Activated naive CD4-positive, alpha-beta T cell treated with anti-CD3 and anti-CD28 coated beads, Interleukin-2, amount 10 ng/mL, durations not matched to agents 7 days and 5 days (primary cell): ENCODE measurements at regions of chr5 and their contacts with region 1.

Region 1: GRCh38 chr5:172714491-172715421 is 56.2 kb downstream of the DUSP1 start:
- DNase-seq: peak; percentile 77
- H3K4me3 Mint-ChIP-seq: no peak overlapping the region
- H3K27ac Mint-ChIP-seq: no peak overlapping the region
- H3K4me1 Mint-ChIP-seq: peaks cover 7% of the 10 kb centered on the region
- H3K27me3 Mint-ChIP-seq: peaks cover 22% of the 10 kb centered on the region

Region 2: DNA sequence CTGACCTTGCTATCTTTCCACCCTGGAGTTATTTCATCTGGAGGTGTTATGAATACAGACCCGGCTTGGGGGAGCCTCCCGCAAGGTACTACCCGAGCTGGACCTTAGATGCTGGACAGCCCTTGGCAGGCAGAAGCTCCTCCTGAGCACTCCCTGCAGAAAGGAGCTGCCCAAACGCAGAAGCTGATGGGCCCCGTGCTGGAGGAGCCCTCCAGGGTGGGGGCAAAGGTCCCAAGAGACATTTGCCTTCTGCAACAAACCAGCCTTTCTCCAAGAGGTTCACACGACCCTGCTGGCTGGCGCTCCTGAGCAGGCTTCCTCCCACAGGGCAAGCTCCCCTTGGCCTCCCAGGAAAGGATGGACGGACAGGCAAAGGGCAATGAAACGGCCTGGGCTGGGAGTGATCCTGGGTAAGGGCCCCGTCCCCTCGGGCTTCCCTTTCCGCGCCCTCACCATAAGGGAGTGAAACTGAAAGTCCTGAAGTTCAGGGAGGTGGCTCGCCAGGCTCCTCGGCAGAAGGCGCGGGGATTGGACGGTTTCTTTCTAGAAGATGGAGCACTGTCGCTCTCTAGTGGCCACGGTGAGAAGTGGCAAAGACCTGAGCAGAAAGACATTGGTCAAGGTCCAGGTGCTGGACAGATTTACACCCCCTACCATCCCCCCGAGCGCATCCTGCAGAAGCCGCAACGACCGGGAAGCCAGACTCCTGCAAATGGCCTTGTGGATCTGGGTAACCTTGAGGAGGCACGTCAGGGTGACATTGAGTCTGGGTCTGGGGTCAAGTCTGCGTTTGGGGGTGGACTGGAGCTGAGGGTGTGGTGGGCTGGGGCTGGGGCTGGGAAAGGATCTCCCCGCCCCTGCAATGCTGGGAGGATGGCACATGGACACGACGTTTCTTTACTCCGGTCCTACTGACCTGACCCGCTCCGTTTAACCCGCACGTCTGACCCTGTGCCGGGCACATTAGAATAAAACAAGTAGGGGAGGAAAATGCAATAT is 17.3 kb before region 1 on chr5:
- CTCF ChIA-PET with region 1: interaction called, 10 read pairs
- DNase-seq: peak; percentile 93
- H3K4me3 Mint-ChIP-seq: peak overlapping the region; percentile 88
- H3K27ac Mint-ChIP-seq: peak overlapping the region; percentile 87
- H3K4me1 Mint-ChIP-seq: peaks cover 24% of the 10 kb centered on the region
- H3K27me3 Mint-ChIP-seq: peaks cover 43% of the 10 kb centered on the region

Region 3: DNA sequence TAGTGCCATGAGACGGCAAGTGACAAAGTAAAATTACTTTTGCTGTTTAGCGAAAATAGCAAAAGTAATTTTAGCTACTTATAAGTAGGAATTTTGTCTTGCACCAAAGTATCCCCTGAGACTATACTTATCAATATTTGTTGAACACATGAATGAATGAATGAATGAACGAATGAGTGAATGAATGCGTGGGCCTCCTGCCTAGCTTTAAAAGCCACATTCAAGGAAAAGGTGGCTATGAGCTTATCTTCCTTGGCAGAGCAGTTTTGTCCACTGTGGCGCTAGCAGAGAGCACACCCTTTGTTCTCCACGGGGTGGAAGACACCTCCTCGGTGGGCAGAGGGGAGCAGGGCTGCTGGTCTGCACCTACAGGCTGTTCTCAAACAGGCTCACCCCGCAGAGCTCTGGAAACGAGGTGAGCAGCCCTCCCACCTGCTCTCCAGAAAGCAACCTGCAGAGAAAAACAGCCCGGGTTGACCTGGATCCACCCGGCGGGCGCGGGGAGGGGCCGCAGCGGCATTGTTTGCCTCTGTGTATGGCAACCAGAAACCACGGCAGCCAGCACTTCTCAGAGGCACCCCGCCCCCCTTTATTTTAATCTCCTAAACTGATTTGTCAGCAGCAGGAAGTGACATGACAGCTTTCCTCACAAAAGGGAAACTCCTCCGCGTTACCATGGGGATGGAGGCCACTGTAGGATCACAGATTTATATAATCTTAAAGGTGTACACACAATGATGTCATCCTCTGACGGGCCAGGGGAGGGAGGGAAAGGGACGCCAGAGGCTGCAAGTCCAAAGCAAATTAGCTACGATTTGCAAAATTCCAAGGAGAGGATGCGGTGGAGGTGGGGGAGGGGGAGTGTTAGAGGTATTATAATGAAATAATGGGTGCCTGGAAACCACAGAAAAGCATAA is 50.4 kb after region 1 on chr5:
- CTCF ChIA-PET with region 1: interaction called, 15 read pairs
- DNase-seq: peak; percentile 98
- H3K4me3 Mint-ChIP-seq: peak overlapping the region; percentile 69
- H3K27ac Mint-ChIP-seq: peak overlapping the region; percentile 85
- H3K4me1 Mint-ChIP-seq: peaks cover 47% of the 10 kb centered on the region
- H3K27me3 Mint-ChIP-seq: peaks cover 7% of the 10 kb centered on the region

Region 4: DNA sequence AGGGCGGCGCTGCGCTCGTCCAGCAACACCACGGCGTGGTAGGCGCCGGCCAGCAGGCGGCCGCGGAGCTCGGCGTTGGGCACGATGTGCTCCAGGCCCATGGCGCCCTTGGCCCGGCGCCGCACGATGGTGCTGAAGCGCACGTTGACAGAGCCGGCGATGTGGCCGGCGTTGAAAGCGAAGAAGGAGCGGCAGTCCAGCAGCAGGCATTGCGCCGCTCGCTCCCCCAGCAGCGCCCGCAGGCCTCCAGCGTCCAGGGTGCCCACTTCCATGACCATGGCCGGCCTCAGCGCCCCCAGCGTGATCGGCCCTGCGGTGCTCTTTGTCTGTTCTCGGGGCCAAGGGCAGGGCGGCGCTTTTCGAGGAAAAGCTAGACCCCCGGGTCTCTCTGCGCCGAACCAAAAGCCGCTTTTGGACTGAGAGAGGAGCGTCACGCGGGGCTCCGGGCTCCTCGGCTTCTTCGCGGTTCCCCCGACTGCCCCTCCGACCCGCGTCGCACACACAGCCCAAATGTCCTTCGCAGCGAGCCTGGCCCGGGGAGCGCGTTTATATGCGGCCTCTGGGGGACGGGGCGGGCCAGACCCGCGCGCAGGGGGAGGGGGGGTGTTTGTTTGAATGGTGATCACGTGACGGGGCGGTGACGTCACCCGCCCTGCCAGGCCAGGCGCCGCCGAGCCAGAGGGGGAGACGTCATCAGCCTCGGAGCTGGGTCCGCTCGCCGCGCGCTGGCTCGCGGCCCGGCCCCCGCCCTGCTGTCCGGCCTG is 56.1 kb after region 1 on chr5 and contains the start of gene DUSP1:
- CTCF ChIA-PET with region 1: interaction called, 15 read pairs
- DNase-seq: peak; percentile 97
- H3K4me3 Mint-ChIP-seq: peak within 1 kb of the TSS; percentile 86
- H3K27ac Mint-ChIP-seq: peak within 1 kb of the TSS; percentile 98
- H3K4me1 Mint-ChIP-seq: peaks cover 59% of the 10 kb centered on the region
- H3K27me3 Mint-ChIP-seq: no peaks in the 10 kb centered on the region

Region 5: GRCh38 chr5:172777881-172778814 is 63.4 kb after region 1 on chr5:
- CTCF ChIA-PET with region 1: interaction called, 10 read pairs
- DNase-seq: no peak
- H3K4me3 Mint-ChIP-seq: peak overlapping the region; percentile 44
- H3K27ac Mint-ChIP-seq: peak overlapping the region; percentile 93
- H3K4me1 Mint-ChIP-seq: peaks cover 42% of the 10 kb centered on the region
- H3K27me3 Mint-ChIP-seq: no peaks in the 10 kb centered on the region

Region 6: GRCh38 chr5:172897481-172898217 is 182.9 kb after region 1 on chr5:
- CTCF ChIA-PET with region 1: interaction called, 13 read pairs
- DNase-seq: peak; percentile 41
- H3K4me3 Mint-ChIP-seq: peak overlapping the region; percentile 44
- H3K27ac Mint-ChIP-seq: peak overlapping the region; percentile 84
- H3K4me1 Mint-ChIP-seq: peaks cover 15% of the 10 kb centered on the region
- H3K27me3 Mint-ChIP-seq: no peaks in the 10 kb centered on the region

Region 7: DNA sequence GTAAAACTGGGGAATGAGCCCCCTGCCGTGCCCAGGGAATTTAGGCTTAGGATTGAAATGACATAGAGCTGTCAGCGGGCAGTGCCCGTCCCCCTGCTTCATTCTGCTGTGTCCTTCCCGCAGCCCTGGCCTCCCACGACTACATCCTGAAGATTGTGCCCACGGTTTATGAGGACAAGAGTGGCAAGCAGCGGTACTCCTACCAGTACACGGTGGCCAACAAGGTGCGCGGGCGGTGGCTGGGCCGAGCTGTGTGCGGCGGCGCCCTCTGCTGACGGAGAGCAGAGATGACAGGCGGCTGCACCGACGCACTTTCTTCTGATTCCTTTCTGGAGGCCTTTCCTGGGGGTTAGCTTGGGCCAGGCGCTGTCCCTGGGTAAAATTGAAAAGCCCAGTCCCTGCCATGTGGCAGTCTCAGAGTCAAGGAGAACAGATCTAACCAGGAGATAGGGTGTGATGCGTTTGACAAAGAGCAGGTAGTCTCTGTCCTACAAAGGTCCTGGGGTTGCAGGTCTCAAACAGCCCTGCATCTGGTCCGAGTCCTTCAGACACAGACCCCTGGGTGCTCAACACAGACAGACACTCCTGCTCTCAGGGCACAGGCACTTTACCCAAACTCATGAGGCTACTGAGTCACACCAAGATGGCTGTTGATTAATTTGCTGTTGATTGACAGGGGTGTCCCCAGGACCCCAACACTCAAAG is 217.7 kb after region 1 on chr5:
- CTCF ChIA-PET with region 1: interaction called, 372 read pairs
- DNase-seq: peak; percentile 76
- H3K4me3 Mint-ChIP-seq: no peak overlapping the region
- H3K27ac Mint-ChIP-seq: no peak overlapping the region
- H3K4me1 Mint-ChIP-seq: peaks cover 5% of the 10 kb centered on the region
- H3K27me3 Mint-ChIP-seq: no peaks in the 10 kb centered on the region